Motor neuron (in vitro differentiated cells): ENCODE measurements at regions of chr17 and their contacts with region 1.

Region 1: DNA sequence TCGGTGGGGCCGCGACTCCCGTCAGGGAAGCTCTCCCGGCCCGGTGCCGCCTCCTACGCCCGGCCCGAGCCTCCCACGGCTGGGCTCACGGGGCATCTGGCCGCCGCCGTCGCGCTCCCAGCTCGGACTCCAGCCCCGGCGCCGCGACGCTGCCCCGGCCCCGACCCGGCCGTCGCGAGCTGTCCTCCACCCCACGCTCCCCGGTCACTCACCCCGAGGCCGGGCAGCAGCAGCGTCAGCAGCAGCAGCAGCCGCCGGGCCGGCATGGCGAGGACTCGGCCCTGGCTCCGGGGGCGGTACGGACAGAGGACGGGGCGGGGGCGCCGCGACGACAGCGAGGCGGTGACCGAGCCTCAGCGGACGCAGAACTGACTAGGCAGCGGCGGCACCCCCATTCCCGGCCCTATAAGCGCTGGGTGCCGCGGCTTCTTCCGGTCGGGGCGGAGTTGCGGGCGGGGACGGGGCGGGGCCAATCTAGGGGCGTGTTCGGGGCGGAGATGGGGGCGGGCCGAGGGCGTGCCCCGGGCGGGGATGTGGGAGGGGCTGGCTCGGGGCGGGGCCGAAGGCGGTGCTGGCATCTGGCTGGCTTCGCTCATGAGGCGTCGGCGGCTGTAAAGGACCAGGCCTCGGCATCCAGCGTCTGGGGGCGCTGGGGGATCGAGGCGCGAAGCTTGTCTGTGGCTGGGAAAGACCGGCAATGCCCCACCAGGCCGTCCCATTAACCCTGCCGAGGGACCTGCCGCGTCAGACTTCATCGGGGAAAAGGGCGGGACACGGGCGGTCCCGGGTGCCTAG is at the start of gene ERN1:
- ATAC-seq: peak; percentile 88 to 96 (median 90)
- H3K4me3 ChIP-seq: peak within 1 kb of the TSS; percentile 74 to 92 (median 82)
- H3K27ac ChIP-seq: peak within 1 kb of the TSS; percentile 59 to 75
- H3K4me1 ChIP-seq: peaks cover 14 to 20% of the 10 kb centered on the region in 2 donors
- total RNA-seq, gene ERN1: 2.3 to 10.4 (median 5.0) TPM

Region 2: GRCh38 chr17:62833395-62833794 is 1296.6 kb before region 1 on chr17:
- in situ Hi-C with region 1: no loop called
- ATAC-seq: no peak
- H3K4me3 ChIP-seq: no peak overlapping the region
- H3K27ac ChIP-seq: no peak overlapping the region
- H3K4me1 ChIP-seq: no peaks in the 10 kb centered on the region

Region 3: GRCh38 chr17:64036198-64036922 is 93.6 kb before region 1 on chr17:
- in situ Hi-C with region 1: loop called in 2 of 9 experiments (anchors 10 to 25 kb)
- ATAC-seq: no peak
- H3K4me3 ChIP-seq: no peak overlapping the region
- H3K27ac ChIP-seq: no peak overlapping the region
- H3K4me1 ChIP-seq: no peaks in the 10 kb centered on the region

Region 4: DNA sequence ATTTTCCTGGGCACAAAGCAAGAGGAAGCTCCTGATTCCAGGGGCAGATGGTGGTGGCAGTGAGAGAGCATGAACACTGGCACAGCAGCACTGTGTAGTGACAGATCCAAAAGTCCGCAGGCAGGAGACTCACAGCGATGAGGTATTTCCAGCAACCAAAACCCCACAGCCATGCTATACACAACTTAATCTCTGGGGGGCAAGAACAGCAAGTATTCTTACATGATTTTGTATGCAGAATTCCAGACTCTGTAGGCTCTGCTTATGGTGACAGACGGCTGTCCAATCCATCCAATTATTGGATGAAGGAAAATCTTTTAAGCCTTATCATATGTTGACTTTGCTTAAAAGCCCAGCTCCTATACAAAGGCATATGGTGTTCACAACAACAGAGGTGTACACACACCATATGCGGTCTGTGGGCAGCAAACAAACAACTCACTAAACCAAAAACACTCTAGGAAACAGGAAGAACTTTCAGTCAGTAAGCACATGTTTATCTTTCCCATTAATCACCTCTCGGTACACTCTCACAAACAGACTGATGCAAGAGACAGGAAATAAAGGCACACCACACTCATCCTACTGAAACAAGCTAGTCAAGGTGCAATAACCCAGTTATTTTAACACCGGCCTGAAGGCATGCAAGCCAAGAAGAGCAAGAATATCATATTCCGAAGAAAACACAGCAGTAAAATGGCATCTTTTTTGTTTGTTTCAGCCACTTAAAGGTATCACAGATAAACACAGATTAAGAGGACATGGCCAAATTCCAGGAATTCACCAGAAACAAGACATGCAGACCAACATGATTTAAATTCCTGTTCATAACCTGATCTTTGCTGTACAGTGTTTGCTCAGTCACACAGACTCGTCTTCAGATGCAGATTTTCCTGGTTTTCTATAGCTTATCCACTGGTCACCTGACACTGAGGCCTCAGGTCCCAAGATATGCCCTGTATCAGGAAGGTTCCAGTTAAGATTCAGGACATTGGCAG is 47.9 kb before region 1 on chr17:
- in situ Hi-C with region 1: no loop called
- ATAC-seq: peak; percentile 35 to 95 (median 82)
- H3K4me3 ChIP-seq: no peak overlapping the region
- H3K27ac ChIP-seq: peak overlapping the region; percentile 87 to 90
- H3K4me1 ChIP-seq: peaks cover 29 to 34% of the 10 kb centered on the region in 2 donors